ENCODE measurements at regions of chr6 and their contacts with region 1.

Region 1: DNA sequence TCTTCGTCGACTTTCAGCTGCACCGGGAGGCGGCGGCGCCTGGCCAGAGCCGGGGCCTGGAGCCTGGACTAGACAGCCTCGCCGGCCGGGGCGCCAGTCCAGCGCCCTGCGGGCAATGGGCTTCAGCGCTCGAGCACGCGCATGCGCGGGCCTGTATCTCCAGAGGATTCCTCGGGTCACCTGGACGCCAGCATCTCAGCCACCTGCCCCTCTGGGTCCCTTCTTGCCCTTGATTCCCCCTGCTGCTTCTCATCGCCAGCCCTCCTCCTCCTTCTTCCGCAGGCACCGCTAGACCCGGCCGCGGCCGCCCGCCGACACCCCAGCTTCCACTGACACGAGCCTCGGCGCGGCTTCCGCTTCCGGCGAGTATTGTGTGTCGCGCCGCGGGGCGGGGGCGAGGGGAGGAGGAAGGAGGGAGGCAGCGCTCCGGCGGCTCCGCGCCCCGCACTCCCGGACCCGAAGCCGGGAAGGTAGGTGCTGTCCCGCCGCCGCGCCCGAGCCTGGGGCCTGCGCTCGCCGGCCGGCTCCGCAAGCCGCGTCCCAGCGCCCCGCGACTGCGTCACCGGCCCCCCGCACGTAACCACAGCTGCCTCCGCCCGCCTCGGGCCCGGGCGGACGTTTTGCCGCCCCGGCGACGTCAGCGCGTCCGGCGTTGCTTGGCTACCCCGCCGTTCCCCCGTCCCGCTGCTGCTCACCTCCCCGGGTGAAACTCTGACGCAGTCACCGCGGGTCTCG is at the start of gene TRIM39:
- DNase-seq: peak; percentile 90
- ATAC-seq: peak; percentile 68
- H3K4me3 Mint-ChIP-seq: peak within 1 kb of the TSS; percentile 96
- H3K27ac Mint-ChIP-seq: peak within 1 kb of the TSS; percentile 99
- H3K4me1 Mint-ChIP-seq: peaks cover 57% of the 10 kb centered on the region
- H3K27me3 Mint-ChIP-seq: no peaks in the 10 kb centered on the region
- CTCF ChIP-seq: no peak
- total RNA-seq, gene TRIM39: 21.6 and 22.0 TPM in 2 replicates

Region 2: GRCh38 chr6:30312267-30312666 is 14.4 kb before region 1 on chr6:
- CTCF ChIA-PET with region 1: no interaction called
- POLR2A ChIA-PET with region 1: interaction called, 15 read pairs
- intact Hi-C with region 1: no loop called
- DNase-seq: no peak
- ATAC-seq: no peak
- H3K4me3 Mint-ChIP-seq: no peak overlapping the region
- H3K27ac Mint-ChIP-seq: no peak overlapping the region
- H3K4me1 Mint-ChIP-seq: peaks cover 17% of the 10 kb centered on the region
- H3K27me3 Mint-ChIP-seq: no peaks in the 10 kb centered on the region
- CTCF ChIP-seq: no peak

Region 3: GRCh38 chr6:30344868-30345671 is 18.4 kb after region 1 on chr6 and contains the start of gene RPP21:
- CTCF ChIA-PET with region 1: interaction called, 3 read pairs
- POLR2A ChIA-PET with region 1: interaction called, 14 read pairs
- intact Hi-C with region 1: loop called (anchors 1 kb)
- DNase-seq: peak; percentile 90
- ATAC-seq: peak; percentile 99
- H3K4me3 Mint-ChIP-seq: peak within 1 kb of the TSS; percentile 92
- H3K27ac Mint-ChIP-seq: peak within 1 kb of the TSS; percentile 94
- H3K4me1 Mint-ChIP-seq: peaks cover 32% of the 10 kb centered on the region
- H3K27me3 Mint-ChIP-seq: no peaks in the 10 kb centered on the region
- CTCF ChIP-seq: no peak
- total RNA-seq, gene RPP21: 38.1 and 46.8 TPM in 2 replicates